Activated naive CD4-positive, alpha-beta T cell treated with anti-CD3 and anti-CD28 coated beads for 36 hours (primary cell): ENCODE measurements at regions of chr19 and their contacts with region 1.

Region 1: GRCh38 chr19:10112895-10113591 is 1.6 kb downstream of the P2RY11 start:
- DNase-seq: peak; percentile 70
- H3K4me3 Mint-ChIP-seq: peak overlapping the region; percentile 32
- H3K27ac Mint-ChIP-seq: peak overlapping the region; percentile 89
- H3K4me1 Mint-ChIP-seq: peaks cover 48% of the 10 kb centered on the region
- H3K27me3 Mint-ChIP-seq: no peaks in the 10 kb centered on the region

Region 2: DNA sequence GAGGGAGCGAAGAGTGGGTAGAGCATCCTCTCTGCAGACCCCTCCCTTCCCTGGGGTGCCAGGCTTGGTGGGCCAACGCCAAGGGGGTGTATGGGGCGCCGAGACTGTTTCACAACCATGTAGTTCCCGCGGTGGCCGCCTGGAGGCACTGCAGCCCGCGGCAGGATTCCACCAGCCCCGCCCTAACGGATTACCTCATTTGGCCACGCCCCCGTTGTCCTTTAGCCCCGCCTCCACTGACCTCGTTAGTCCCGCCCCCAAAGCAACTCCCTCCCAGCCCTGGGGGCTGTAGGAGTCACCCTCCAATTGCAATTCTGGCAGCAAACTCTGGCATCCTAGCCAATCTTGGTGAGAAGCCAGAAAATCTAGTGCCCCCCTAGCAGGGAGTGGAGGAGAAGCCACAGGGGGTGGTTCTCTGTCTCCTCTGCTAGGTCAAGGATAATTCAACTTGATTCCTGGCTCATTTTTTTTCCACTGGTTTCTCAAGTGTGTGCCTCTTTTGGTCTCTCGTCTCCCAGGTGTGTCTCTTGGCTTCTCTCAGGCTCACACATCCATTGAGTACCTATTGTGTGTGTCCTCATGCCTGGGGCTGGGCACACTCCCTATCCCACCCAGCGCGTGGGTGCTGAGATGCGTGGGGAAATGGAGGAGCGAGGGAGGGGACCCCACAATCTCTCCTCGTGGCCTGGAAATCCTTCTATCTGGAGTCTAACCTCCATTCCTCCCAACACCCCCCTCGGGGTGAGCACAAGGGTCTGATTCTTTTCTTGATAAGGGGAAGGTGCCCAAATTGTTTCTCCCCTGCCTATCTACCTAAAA is 178.7 kb before region 1 on chr19:
- CTCF ChIA-PET with region 1: interaction called, 3 read pairs
- intact Hi-C with region 1: loop called (anchors 5 kb)
- DNase-seq: peak; percentile 91
- H3K4me3 Mint-ChIP-seq: no peak overlapping the region
- H3K27ac Mint-ChIP-seq: no peak overlapping the region
- H3K4me1 Mint-ChIP-seq: peaks cover 28% of the 10 kb centered on the region
- H3K27me3 Mint-ChIP-seq: peaks cover 56% of the 10 kb centered on the region

Region 3: GRCh38 chr19:10074153-10074552 is 38.9 kb before region 1 on chr19:
- CTCF ChIA-PET with region 1: no interaction called
- intact Hi-C with region 1: loop called (anchors 2 kb)
- DNase-seq: peak; percentile 67
- H3K4me3 Mint-ChIP-seq: no peak overlapping the region
- H3K27ac Mint-ChIP-seq: no peak overlapping the region
- H3K4me1 Mint-ChIP-seq: no peaks in the 10 kb centered on the region
- H3K27me3 Mint-ChIP-seq: no peaks in the 10 kb centered on the region

Region 4: GRCh38 chr19:10095948-10096621 is 17.0 kb before region 1 on chr19:
- CTCF ChIA-PET with region 1: interaction called, 14 read pairs
- intact Hi-C with region 1: loop called (anchors 1 kb)
- DNase-seq: peak; percentile 80
- H3K4me3 Mint-ChIP-seq: peak overlapping the region; percentile 58
- H3K27ac Mint-ChIP-seq: no peak overlapping the region
- H3K4me1 Mint-ChIP-seq: peaks cover 23% of the 10 kb centered on the region
- H3K27me3 Mint-ChIP-seq: no peaks in the 10 kb centered on the region

Region 5: GRCh38 chr19:10270616-10271394 is 157.8 kb after region 1 on chr19 and contains the start of gene ICAM1:
- CTCF ChIA-PET with region 1: no interaction called
- intact Hi-C with region 1: no loop called
- DNase-seq: peak; percentile 86
- H3K4me3 Mint-ChIP-seq: peak within 1 kb of the TSS; percentile 78
- H3K27ac Mint-ChIP-seq: peak within 1 kb of the TSS; percentile 85
- H3K4me1 Mint-ChIP-seq: peaks cover 34% of the 10 kb centered on the region
- H3K27me3 Mint-ChIP-seq: no peaks in the 10 kb centered on the region
- total RNA-seq, gene ICAM1: 11.5 to 12.0 TPM